AG04449 (cell line): ENCODE measurements at regions of chr20 and their contacts with region 1.

Region 1: GRCh38 chr20:45095753-45096371 is 5.1 kb downstream of the KCNS1 start:
- DNase-seq: peak; percentile 7
- H3K4me3 ChIP-seq: no peak overlapping the region
- CTCF ChIP-seq: peak; percentile 79

Region 2: GRCh38 chr20:44966030-44966961 is 129.6 kb before region 1 on chr20 and contains the start of gene STK4:
- CTCF ChIA-PET with region 1: interaction called, 15 read pairs
- POLR2A ChIA-PET with region 1: no interaction called
- DNase-seq: no peak
- H3K4me3 ChIP-seq: peak within 1 kb of the TSS; percentile 96
- CTCF ChIP-seq: peak; percentile 71

Region 3: DNA sequence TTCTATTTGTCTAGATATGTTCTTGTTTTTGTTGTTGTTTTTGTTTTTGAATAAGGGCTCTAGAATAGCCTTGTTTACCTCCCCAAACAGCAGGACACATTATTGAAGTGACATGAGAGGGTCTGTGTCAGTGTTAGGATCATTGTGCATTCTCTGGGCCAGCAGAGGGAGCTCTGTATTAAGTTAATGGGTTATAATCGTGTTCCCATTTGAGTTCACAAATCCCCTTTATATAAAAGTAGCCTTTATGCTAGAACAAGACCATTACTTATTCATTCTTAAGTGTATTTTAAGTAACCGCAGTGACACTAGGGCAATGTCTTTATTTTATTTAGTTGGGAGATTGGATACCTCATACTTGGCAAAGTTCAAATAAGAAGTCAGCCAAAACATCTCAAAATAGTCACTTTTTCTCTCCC is 84.7 kb before region 1 on chr20:
- CTCF ChIA-PET with region 1: interaction called, 156 read pairs
- POLR2A ChIA-PET with region 1: no interaction called
- DNase-seq: no peak
- H3K4me3 ChIP-seq: no peak overlapping the region
- CTCF ChIP-seq: peak; percentile 54

Region 4: DNA sequence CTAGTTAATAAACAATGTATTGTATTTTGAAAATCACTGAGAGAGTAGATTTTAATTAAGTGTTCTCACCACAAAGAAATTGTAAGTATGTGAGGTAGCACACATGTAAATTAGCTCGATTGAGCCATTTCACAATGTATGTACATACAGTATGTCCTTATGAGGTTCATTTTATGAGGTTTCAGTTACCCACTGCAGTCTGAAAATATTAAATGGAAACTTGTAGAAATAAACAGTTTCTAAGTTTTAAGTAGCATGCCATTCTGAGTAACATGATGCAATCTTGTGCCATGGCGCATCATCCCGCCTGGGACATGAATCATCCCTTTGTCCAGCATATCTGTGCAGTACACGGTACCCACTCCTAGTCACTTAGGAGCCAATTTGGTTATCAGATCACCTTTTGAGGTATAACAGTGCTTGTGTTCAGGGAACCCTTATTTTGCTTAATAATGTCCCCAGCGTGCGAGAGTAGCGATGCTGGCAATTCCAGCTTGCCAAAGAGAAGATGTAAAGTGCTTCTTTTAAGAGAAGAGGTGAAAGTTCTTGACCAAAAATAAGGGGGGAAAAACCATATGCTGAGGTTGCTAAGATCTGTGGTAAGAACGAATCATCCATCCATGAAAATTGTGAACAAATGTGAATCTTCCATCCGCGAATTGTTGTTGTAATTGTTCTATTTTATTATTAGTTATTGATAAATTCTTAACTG is 59.7 kb before region 1 on chr20:
- CTCF ChIA-PET with region 1: interaction called, 297 read pairs
- POLR2A ChIA-PET with region 1: no interaction called
- DNase-seq: no peak
- H3K4me3 ChIP-seq: no peak overlapping the region
- CTCF ChIP-seq: no peak

Region 5: DNA sequence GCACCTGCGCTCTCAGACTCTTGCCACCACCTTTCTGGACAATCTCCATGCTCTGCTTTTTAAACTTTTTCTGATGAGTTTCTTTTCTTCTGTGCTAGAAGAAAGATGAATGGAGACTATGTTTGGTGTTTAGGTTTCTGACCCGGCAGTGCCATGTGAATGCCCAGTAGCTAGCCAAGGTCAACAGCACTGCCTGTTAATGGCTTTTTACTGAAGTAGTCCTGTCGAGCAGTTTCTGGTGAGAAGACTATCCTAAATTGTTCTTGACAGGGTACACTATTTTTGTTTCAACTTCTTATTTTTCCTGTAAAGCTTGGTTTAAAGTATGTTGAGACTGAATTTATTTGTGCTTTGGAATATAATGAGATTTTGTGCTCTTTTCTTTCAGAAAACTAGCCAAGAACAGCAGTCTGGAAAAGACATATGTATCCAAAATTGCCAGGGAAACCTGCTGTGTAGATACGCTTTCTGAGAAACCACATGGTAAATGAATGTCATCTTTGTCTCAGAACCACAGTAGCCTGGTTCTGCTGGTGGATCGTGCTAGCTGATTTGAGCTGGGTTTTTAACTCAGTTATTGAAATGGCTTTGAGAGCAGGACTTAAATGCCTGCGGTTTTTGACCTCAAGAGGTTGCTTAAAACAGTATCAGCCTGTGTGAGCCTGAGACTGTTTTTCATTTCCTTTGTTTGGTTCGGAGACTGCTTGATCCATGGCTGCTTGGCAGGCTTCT is 43.0 kb before region 1 on chr20:
- CTCF ChIA-PET with region 1: interaction called, 129 read pairs
- POLR2A ChIA-PET with region 1: no interaction called
- DNase-seq: peak; percentile 57
- H3K4me3 ChIP-seq: no peak overlapping the region
- CTCF ChIP-seq: no peak

Region 6: GRCh38 chr20:45070932-45071632 is 24.8 kb before region 1 on chr20:
- CTCF ChIA-PET with region 1: interaction called, 52 read pairs
- POLR2A ChIA-PET with region 1: no interaction called
- DNase-seq: no peak
- H3K4me3 ChIP-seq: no peak overlapping the region
- CTCF ChIP-seq: no peak

Region 7: GRCh38 chr20:45111799-45112471 is 16.1 kb after region 1 on chr20:
- CTCF ChIA-PET with region 1: interaction called, 231 read pairs
- POLR2A ChIA-PET with region 1: no interaction called
- DNase-seq: no peak
- H3K4me3 ChIP-seq: no peak overlapping the region
- CTCF ChIP-seq: peak; percentile 27